OCI-LY7 (cell line): ENCODE measurements at regions of chr11 and their contacts with region 1.

Region 1: GRCh38 chr11:16382638-16383380 is 26.5 kb upstream of the SOX6 start:
- DNase-seq: no peak
- H3K4me3 ChIP-seq: no peak overlapping the region
- H3K27ac ChIP-seq: no peak overlapping the region
- H3K4me1 ChIP-seq: no peaks in the 10 kb centered on the region
- CTCF ChIP-seq: no peak

Region 2: DNA sequence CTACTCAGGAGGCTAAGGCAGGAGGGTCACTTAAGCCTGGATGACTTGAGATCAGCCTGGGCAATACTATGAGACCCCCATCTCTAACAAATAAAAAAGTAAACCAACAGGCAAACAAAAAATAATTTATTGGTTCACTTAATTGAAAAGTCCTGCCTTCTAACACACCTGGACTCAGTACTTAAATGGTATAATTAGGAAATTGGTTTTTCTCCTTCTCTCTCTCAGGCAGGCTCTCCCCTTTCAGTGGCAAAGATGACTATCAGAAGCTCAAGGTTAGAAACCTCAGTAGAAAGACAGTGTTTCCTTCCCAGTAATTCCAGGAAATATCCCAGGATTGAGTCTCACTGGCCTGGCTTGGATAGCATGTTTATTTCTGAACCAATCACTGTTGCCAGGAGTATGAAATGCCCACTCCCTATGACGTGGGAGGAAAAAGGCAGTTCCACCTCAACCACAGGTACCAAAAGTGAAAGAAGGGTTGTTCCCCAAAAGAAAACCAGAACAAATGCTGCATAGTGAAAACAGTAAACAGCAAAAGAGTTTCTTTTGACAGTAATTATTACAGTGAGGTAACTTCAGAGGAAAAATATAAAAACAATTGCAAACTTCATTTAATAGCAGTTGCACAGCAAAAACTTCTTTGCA is 29.8 kb after region 1 on chr11:
- CTCF ChIA-PET with region 1: no interaction called
- POLR2A ChIA-PET with region 1: interaction called, 11 read pairs
- intact Hi-C with region 1: no loop called
- DNase-seq: no peak
- H3K4me3 ChIP-seq: no peak overlapping the region
- H3K27ac ChIP-seq: no peak overlapping the region
- H3K4me1 ChIP-seq: no peaks in the 10 kb centered on the region
- CTCF ChIP-seq: no peak

Region 3: GRCh38 chr11:16487724-16488123 is 104.9 kb after region 1 on chr11:
- CTCF ChIA-PET with region 1: no interaction called
- POLR2A ChIA-PET with region 1: no interaction called
- intact Hi-C with region 1: no loop called
- DNase-seq: no peak
- H3K4me3 ChIP-seq: no peak overlapping the region
- H3K27ac ChIP-seq: no peak overlapping the region
- H3K4me1 ChIP-seq: no peaks in the 10 kb centered on the region
- CTCF ChIP-seq: no peak